A549 (cell line): ENCODE measurements at regions of chr16 and their contacts with region 1.

Region 1: DNA sequence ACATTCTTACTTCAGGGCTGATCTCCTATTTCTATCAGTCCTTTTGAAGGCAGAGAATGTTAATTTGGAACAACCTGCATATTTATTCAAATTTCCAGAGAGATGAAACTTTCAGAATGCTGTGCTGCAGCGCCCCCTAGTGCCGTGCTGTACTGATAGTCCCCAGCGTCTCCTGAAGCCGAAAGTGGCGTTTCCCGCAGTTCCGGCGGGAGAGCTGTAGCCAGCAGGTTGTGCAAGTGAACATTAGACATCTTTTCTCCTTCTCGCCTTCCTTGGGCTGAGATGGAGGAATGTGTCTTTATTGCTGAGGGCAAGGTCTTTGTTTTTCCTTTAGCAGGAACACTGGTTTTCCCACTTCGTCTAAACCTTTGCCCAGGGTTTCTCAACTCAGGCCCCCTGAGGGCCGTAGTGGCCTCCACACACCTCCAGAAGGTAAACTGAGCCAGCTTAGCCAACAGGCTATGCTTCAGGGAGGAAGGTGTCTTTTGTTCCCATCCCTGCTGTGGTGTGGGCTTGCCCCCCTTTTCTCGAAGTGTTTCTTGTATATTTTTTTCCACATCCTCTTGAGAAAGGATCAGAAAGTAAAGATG is 26.4 kb downstream of the USP10 start:
- DNase-seq: peak; percentile 58 to 85
- ATAC-seq: peak; percentile 84 to 86
- H3K4me3 ChIP-seq: 0 out of 3 replicates have a peak overlapping the region, but pooled peaks have one; percentile 20
- H3K27ac ChIP-seq: peak overlapping the region; percentile 50 to 92
- H3K4me1 ChIP-seq: peaks cover 69% of the 10 kb centered on the region
- CTCF ChIP-seq: peak; percentile 97
- EP300 ChIP-seq: no peak
- POLR2A ChIP-seq: no peak
- RAD21 ChIP-seq: peak; percentile 83 to 88

Region 2: DNA sequence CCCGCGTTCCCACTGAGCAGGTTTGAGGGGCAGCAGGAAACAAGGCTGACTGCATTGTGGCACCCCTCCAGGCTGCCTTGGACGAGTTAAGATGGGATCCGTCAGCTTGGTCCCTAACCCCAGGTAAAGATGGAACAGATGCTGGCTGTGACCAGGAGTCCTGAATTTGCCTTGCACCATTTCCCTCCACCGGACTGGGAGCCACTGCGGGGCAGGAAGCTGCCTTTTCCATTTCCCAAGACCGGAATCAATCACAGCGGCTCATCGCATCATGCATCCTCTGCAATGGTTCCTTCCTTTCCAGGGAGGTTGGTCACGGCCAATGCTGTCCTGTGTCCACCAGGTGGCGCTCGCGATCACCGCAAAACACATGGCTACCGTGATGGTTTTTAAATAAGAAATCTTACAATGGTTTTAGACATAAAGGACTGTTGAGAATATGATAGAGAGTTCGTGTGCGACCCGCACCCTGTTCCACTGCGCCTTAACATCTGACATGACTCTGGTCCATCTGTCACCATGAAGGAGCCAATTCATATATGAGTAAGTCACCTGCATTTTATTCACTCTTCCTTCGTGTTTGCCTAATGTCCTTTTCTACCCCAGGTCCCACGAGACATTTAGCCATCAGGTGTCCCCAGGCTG is 214.9 kb before region 1 on chr16:
- CTCF ChIA-PET with region 1: interaction called, 25 read pairs
- POLR2A ChIA-PET with region 1: no interaction called
- DNase-seq: peak; percentile 76 to 85
- ATAC-seq: peak; percentile 88 to 90
- H3K4me3 ChIP-seq: peak overlapping the region; percentile 14; the same call in 1 of the 3 replicates
- H3K27ac ChIP-seq: peak overlapping the region; percentile 36 to 77
- H3K4me1 ChIP-seq: peaks cover 7% of the 10 kb centered on the region
- CTCF ChIP-seq: peak; percentile 87
- EP300 ChIP-seq: no peak
- POLR2A ChIP-seq: no peak
- RAD21 ChIP-seq: peak; percentile 87 to 95

Region 3: DNA sequence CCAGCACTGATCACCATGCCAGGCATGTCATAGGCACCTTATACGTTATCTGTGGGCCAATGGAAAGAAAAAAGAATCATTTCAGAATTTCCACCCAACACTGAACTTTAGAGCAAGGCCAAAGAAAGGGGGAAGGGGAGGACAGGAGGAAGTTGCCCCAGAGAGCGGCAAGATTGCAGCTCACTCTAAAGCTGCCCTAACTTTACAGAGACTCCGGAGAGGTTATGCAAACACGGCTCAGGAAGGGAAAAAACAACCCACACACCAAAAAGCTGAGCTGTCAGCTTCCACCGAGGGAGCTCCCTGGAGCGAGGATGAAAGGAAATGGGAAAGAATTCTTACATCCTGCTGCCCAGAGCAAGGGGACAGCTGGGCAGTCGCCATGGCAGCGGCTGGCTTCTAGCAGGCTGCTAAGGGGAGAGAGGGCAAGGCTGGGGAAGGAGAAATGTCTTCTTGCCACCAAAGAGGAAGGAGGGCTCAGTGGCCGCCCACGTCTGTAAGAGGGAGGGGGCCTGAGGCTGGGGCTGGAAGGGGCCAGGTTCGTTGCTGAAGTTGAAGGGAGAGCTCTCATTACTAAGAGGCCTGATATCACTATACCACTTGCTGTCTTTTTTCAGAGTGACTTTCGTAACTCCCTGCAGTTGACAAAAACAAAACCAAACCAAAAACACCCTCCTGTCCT is 126.5 kb before region 1 on chr16:
- CTCF ChIA-PET with region 1: interaction called, 10 read pairs
- POLR2A ChIA-PET with region 1: no interaction called
- DNase-seq: peak in 1 of 2 experiments; percentile 46
- ATAC-seq: peak in 1 of 2 experiments; percentile 26; a peak in 3 of 6 replicates
- H3K4me3 ChIP-seq: no peak overlapping the region
- H3K27ac ChIP-seq: peak overlapping the region; percentile 84 to 95
- H3K4me1 ChIP-seq: peaks cover 68% of the 10 kb centered on the region
- CTCF ChIP-seq: no peak
- EP300 ChIP-seq: no peak
- POLR2A ChIP-seq: no peak
- RAD21 ChIP-seq: no peak

Region 4: DNA sequence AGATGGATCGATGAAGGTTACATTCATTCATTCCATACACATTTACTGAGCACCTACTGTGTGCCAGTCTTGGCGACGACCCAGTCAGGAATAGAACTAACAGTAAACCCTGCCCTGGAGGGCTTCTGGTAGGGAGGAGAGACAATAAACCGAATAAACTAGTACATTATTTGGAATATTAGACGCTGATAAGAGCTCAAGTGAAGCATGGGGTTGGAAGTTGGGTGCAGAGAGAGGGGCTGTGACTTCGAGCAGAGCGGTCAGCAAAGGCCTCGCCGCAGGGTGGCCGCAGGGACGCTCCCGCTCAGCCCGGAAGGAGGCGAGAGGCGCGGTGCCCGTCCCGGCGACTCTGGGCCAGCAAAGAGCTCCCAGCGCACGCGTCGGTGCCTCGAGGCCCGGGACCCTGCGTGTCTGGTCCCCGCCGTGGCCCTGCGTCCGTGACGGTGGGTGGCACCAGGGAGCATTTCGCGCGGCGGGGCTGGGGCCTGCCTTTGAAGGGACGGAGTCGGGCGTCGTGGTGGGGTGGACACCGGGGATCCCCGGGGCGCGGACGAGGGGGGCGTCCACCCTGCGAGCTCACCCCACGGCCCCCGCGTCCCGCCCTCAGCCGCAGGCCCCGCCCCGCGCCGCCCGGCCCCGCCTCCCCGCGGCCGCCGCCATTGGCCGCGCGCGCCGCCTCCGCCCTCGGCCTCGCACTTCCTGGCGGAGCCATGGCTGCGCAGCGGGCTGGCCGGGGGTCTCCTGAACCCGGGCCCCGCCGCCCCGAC is 78.2 kb before region 1 on chr16 and contains the start of gene KLHL36:
- CTCF ChIA-PET with region 1: interaction called, 11 read pairs
- POLR2A ChIA-PET with region 1: no interaction called
- DNase-seq: peak; percentile 46 to 82
- ATAC-seq: peak; percentile 82 to 91
- H3K4me3 ChIP-seq: peak within 1 kb of the TSS; percentile 92
- H3K27ac ChIP-seq: peak within 1 kb of the TSS; percentile 90 to 99
- H3K4me1 ChIP-seq: peaks cover 23% of the 10 kb centered on the region; the same call in 2 of the 3 replicates
- CTCF ChIP-seq: no peak
- EP300 ChIP-seq: no peak
- POLR2A ChIP-seq: no peak; the same call in 1 of the 2 replicates
- RAD21 ChIP-seq: no peak
- polyA plus RNA-seq, gene KLHL36: 21.0 and 22.3 TPM in 2 replicates

Region 5: GRCh38 chr16:84672276-84673202 is 53.6 kb before region 1 on chr16:
- CTCF ChIA-PET with region 1: interaction called, 138 read pairs
- POLR2A ChIA-PET with region 1: no interaction called
- DNase-seq: peak; percentile 68 to 88
- ATAC-seq: peak; percentile 88 to 95
- H3K4me3 ChIP-seq: no peak overlapping the region
- H3K27ac ChIP-seq: no peak overlapping the region
- H3K4me1 ChIP-seq: no peaks in the 10 kb centered on the region
- CTCF ChIP-seq: peak; percentile 89
- EP300 ChIP-seq: no peak
- POLR2A ChIP-seq: no peak
- RAD21 ChIP-seq: peak; percentile 62 to 74

Region 6: GRCh38 chr16:84714028-84714427 is 12.1 kb before region 1 on chr16:
- CTCF ChIA-PET with region 1: interaction called, 133 read pairs
- POLR2A ChIA-PET with region 1: no interaction called
- DNase-seq: no peak
- ATAC-seq: no peak
- H3K4me3 ChIP-seq: no peak overlapping the region
- H3K27ac ChIP-seq: no peak overlapping the region
- H3K4me1 ChIP-seq: peaks cover 11% of the 10 kb centered on the region
- CTCF ChIP-seq: no peak
- EP300 ChIP-seq: no peak
- POLR2A ChIP-seq: no peak
- RAD21 ChIP-seq: no peak

Region 7: GRCh38 chr16:84754353-84754856 is 28.2 kb after region 1 on chr16:
- CTCF ChIA-PET with region 1: interaction called, 202 read pairs
- POLR2A ChIA-PET with region 1: no interaction called
- DNase-seq: peak; percentile 78 to 86
- ATAC-seq: peak; percentile 88 to 90
- H3K4me3 ChIP-seq: no peak overlapping the region
- H3K27ac ChIP-seq: no peak overlapping the region
- H3K4me1 ChIP-seq: peaks cover 25% of the 10 kb centered on the region
- CTCF ChIP-seq: peak; percentile 89
- EP300 ChIP-seq: no peak
- POLR2A ChIP-seq: no peak
- RAD21 ChIP-seq: peak; percentile 79 to 86

Region 8: DNA sequence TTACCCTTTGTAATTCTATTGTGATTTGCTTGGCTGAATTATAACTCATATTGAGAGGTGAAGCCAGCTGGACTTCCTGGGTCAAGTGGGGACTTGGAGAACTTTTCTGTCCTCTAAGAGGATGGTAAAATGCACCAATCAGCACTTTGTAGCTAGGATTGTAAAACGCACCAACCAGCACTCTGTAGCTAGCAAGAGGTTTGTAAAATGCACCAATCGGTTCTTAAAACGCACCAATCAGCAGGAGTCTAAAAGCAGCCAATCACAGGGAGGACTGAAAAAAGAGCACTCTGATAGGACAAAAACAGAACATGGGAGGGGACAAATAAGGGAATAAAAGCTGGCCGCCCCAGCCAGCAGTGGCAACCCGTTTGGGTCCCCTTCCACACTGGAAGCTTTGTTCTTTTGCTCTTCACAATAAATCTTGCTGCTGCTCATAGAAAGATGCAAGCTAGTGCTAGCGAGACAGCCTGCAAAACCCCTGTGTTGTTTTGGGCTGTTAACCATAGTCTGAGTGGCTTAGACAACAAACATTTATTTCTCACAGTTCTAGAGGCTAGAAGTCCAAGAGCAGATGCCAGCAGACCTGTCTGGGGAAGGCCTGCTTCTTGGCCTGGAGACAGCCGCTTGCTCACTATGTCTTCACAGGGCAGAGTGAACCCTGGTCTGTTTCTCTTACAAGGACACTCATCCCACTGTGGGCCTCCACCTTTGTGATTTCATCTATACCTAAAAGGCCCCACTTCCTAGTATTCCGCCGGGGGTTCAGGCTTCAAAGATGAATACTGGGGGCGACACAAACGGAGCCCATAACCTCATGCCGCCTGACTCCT is 54.6 kb after region 1 on chr16:
- CTCF ChIA-PET with region 1: no interaction called
- POLR2A ChIA-PET with region 1: no interaction called
- DNase-seq: peak in 1 of 2 experiments; percentile 32
- ATAC-seq: peak; percentile 19 to 34; a peak in 4 of 6 replicates
- H3K4me3 ChIP-seq: no peak overlapping the region
- H3K27ac ChIP-seq: no peak overlapping the region
- H3K4me1 ChIP-seq: no peaks in the 10 kb centered on the region
- CTCF ChIP-seq: no peak
- EP300 ChIP-seq: no peak
- POLR2A ChIP-seq: no peak
- RAD21 ChIP-seq: no peak

Region 9: GRCh38 chr16:84795329-84796053 is 69.3 kb after region 1 on chr16:
- CTCF ChIA-PET with region 1: no interaction called
- POLR2A ChIA-PET with region 1: no interaction called
- DNase-seq: no peak
- ATAC-seq: no peak; a peak in 1 of 6 replicates
- H3K4me3 ChIP-seq: no peak overlapping the region
- H3K27ac ChIP-seq: no peak overlapping the region
- H3K4me1 ChIP-seq: no peaks in the 10 kb centered on the region
- CTCF ChIP-seq: no peak
- EP300 ChIP-seq: no peak
- POLR2A ChIP-seq: no peak
- RAD21 ChIP-seq: no peak